ENCODE measurements at regions of chr7 and their contacts with region 1.

Region 1: GRCh38 chr7:150378853-150379440 is at the start of gene ZNF775:
- DNase-seq: peak; percentile 89 to 94 (median 91)
- H3K4me3 ChIP-seq: peak within 1 kb of the TSS; percentile 89
- H3K4me3 Mint-ChIP-seq: peak within 1 kb of the TSS; percentile 85 to 92 (median 90)
- H3K27ac ChIP-seq: peak within 1 kb of the TSS; percentile 71
- H3K27ac Mint-ChIP-seq: peak within 1 kb of the TSS; percentile 74 to 93 (median 87)
- H3K4me1 ChIP-seq: peaks cover 38% of the 10 kb centered on the region
- H3K4me1 Mint-ChIP-seq: peaks cover 26 to 67% (median 44%) of the 10 kb centered on the region in 4 donors
- H3K27me3 ChIP-seq: no peaks in the 10 kb centered on the region
- H3K27me3 Mint-ChIP-seq: no peaks in the 10 kb centered on the region
- total RNA-seq, gene ZNF775: 4.3 to 5.5 TPM

Region 2: DNA sequence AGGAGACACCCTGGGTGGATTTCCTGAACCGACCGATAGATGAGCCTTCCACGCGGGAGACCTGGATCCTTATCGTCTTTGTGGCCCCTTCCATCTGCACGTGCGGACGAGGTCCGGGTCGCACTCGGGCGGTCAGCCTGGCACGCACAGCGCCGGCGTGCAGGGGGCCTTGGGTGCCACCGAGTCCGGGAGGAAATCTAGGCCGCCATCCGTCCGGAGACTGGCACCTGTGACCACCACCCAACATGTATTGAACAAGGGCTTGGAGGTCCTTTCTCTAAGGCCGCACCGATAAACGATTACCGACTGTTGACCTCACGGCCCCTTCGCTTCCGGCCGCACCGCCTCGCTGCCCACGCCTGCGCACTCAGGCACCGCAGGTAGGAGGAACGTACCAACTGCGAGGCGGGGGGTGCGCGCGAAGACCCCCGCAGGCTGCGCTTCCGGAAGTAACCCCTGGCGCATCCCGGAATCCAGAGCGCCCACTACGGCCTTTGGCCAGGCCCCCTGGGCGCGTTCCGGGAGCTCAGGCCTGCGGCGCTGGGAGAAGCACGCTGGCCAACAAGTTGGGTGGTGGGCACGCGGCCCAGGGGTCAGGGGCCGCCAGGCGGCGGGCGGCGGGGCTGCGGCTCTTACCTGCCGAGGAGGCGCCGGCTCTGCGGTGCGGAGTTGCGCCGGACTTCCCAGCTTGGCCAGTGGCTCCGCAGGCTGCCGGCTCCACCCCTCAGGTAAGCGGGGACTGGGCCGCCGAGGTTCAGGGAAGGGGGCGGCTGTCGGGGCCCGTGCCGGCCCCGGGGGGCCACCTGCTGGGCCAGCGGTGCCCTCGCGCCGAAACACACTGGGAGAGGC is 55.9 kb before region 1 on chr7 and contains the starts of genes ACTR3C and LRRC61:
- CTCF ChIA-PET with region 1: no interaction called
- POLR2A ChIA-PET with region 1: interaction called, 10 read pairs
- intact Hi-C with region 1: loop called (anchors 2 kb)
- DNase-seq: peak in 4 of 5 donors; percentile 40 to 54 (median 46)
- H3K4me3 ChIP-seq: peak within 1 kb of the TSS; percentile 82 to 96
- H3K4me3 Mint-ChIP-seq: peak within 1 kb of the TSS; percentile 90 to 99 (median 98)
- H3K27ac ChIP-seq: peak within 1 kb of the TSS; percentile 82
- H3K27ac Mint-ChIP-seq: peak within 1 kb of the TSS; percentile 84 to 99 (median 98)
- H3K4me1 ChIP-seq: peaks cover 44% of the 10 kb centered on the region
- H3K4me1 Mint-ChIP-seq: peaks cover 31 to 49% (median 40%) of the 10 kb centered on the region in 4 donors
- H3K27me3 ChIP-seq: no peaks in the 10 kb centered on the region
- H3K27me3 Mint-ChIP-seq: no peaks in the 10 kb centered on the region
- total RNA-seq, gene ACTR3C: 13.0 to 17.8 TPM
- total RNA-seq, gene LRRC61: 11.0 to 12.8 TPM

Region 3: GRCh38 chr7:150340024-150340749 is 38.8 kb before region 1 on chr7:
- CTCF ChIA-PET with region 1: no interaction called
- POLR2A ChIA-PET with region 1: no interaction called
- intact Hi-C with region 1: no loop called
- DNase-seq: no peak
- H3K4me3 ChIP-seq: no peak overlapping the region
- H3K4me3 Mint-ChIP-seq: no peak overlapping the region
- H3K27ac ChIP-seq: no peak overlapping the region
- H3K27ac Mint-ChIP-seq: no peak overlapping the region
- H3K4me1 ChIP-seq: no peaks in the 10 kb centered on the region
- H3K4me1 Mint-ChIP-seq: peaks cover 0 to 6% (median 3%) of the 10 kb centered on the region in 4 donors
- H3K27me3 ChIP-seq: peaks cover 5% of the 10 kb centered on the region
- H3K27me3 Mint-ChIP-seq: peaks cover 18 to 26% of the 10 kb centered on the region in 2 donors

Region 4: GRCh38 chr7:150356265-150356897 is 22.6 kb before region 1 on chr7:
- CTCF ChIA-PET with region 1: interaction called, 19 read pairs
- POLR2A ChIA-PET with region 1: interaction called, 11 read pairs
- intact Hi-C with region 1: loop called (anchors 1 kb)
- DNase-seq: peak in 4 of 5 donors; percentile 41 to 55 (median 53)
- H3K4me3 ChIP-seq: no peak overlapping the region
- H3K4me3 Mint-ChIP-seq: peak overlapping the region in 3 of 8 donors; percentile 8 to 69 (median 26)
- H3K27ac ChIP-seq: peak overlapping the region; percentile 6
- H3K27ac Mint-ChIP-seq: peak overlapping the region in 6 of 7 donors; percentile 13 to 60 (median 44)
- H3K4me1 ChIP-seq: peaks cover 27% of the 10 kb centered on the region
- H3K4me1 Mint-ChIP-seq: peaks cover 18 to 44% (median 32%) of the 10 kb centered on the region in 4 donors
- H3K27me3 ChIP-seq: no peaks in the 10 kb centered on the region
- H3K27me3 Mint-ChIP-seq: no peaks in the 10 kb centered on the region

Region 5: DNA sequence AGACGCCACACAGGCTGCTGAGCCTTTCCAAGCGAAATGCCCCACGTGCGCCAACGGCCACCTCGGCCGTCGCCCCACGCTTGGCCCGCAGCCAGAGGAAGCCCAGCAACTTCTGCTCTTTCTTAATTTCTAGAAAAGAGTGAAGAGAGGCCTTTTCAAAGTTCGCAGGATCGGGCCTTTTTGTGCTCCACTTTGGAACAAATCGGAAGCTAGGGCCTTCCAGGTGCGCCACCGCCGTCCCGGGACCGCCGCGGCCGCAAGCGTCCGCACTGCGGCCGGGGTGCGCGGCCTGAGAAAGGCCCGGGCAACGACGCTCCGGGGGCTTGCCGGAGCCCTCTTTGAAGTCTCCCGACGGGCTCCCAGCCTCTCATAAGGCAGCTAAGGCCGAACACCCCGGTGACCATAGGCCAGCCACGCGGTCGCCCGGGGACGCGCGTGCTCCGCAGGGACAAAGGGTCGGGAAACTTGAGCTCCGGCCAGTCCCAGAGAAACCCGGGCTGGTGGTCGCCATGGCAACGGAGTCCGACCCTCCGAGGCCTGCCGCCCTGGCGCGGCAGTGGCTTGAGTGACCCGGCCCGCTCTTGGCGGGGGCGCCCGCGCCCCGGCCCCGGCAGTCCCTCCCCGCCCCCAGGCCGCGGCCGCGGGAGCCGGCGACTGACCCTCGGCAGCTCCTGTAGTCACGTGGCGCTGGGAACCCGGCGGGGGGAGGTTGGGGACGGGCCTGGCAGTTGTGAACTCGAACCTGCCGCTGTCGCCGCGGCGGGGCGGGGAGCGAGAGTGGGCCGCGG is 10.7 kb before region 1 on chr7 and contains the start of gene REPIN1:
- CTCF ChIA-PET with region 1: interaction called, 14 read pairs
- POLR2A ChIA-PET with region 1: interaction called, 55 read pairs
- intact Hi-C with region 1: loop called (anchors 1 kb)
- DNase-seq: peak; percentile 75 to 91 (median 76)
- H3K4me3 ChIP-seq: peak within 1 kb of the TSS; percentile 64 to 89
- H3K4me3 Mint-ChIP-seq: peak within 1 kb of the TSS; percentile 91 to 98 (median 95)
- H3K27ac ChIP-seq: peak within 1 kb of the TSS; percentile 75
- H3K27ac Mint-ChIP-seq: peak within 1 kb of the TSS; percentile 83 to 96 (median 93)
- H3K4me1 ChIP-seq: peaks cover 26% of the 10 kb centered on the region
- H3K4me1 Mint-ChIP-seq: peaks cover 13 to 42% (median 25%) of the 10 kb centered on the region in 4 donors
- H3K27me3 ChIP-seq: no peaks in the 10 kb centered on the region
- H3K27me3 Mint-ChIP-seq: no peaks in the 10 kb centered on the region
- total RNA-seq, gene REPIN1: 72.0 to 78.5 TPM

Region 6: DNA sequence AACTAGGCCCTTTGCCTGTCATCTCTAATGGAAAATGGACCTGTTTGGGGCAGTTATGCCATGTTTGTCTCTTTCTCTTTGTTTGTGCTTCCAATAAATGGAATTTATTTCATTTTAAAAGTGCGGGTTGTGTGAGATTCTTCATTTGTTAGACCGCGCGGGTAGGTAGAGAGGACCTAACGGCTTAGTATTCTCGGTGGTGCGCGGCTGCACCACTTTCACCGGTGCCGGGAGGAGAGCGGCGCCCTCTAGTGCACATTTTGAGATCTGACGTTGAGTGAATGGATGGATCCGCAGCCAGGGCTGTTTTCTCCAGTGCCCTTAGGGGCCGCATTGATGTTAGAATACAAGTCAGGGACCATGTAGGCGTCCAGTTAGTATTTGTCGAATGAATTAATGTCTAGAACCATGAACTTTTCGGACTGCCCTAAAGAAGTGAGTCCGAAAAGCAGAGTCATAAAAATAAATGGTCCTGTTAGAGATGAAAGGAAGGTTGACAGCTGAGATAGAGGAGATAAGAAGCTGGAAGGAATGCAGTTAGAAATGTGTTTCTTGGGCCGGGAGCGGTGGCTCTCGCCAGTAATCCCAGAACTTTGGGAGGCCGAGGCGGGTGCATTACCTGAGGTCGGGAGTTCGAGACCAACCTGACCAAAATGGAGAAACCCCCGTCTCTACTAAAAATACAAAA is 42.2 kb after region 1 on chr7:
- CTCF ChIA-PET with region 1: interaction called, 4 read pairs
- POLR2A ChIA-PET with region 1: interaction called, 3 read pairs
- intact Hi-C with region 1: loop called (anchors 1 kb)
- DNase-seq: peak; percentile 77 to 84 (median 81)
- H3K4me3 ChIP-seq: no peak overlapping the region
- H3K4me3 Mint-ChIP-seq: peak overlapping the region; percentile 9 to 71 (median 54)
- H3K27ac ChIP-seq: no peak overlapping the region
- H3K27ac Mint-ChIP-seq: peak overlapping the region in 5 of 7 donors; percentile 1 to 69 (median 10)
- H3K4me1 ChIP-seq: peaks cover 10% of the 10 kb centered on the region
- H3K4me1 Mint-ChIP-seq: peaks cover 5 to 8% (median 6%) of the 10 kb centered on the region in 4 donors
- H3K27me3 ChIP-seq: no peaks in the 10 kb centered on the region
- H3K27me3 Mint-ChIP-seq: no peaks in the 10 kb centered on the region